IMR-90 (cell line): ENCODE measurements at regions of chr2 and their contacts with region 1.

Region 1: GRCh38 chr2:112259509-112260294 is 4.9 kb upstream of the ZC3H8 start:
- DNase-seq: peak; percentile 76
- ATAC-seq: peak; percentile 63
- H3K4me3 ChIP-seq: no peak overlapping the region
- H3K27ac ChIP-seq: no peak overlapping the region
- H3K4me1 ChIP-seq: no peaks in the 10 kb centered on the region
- H3K27me3 ChIP-seq: peaks cover 4% of the 10 kb centered on the region; the same call in 1 of the 2 replicates
- CTCF ChIP-seq: peak; percentile 98
- POLR2A ChIP-seq: no peak
- RAD21 ChIP-seq: peak; percentile 96

Region 2: DNA sequence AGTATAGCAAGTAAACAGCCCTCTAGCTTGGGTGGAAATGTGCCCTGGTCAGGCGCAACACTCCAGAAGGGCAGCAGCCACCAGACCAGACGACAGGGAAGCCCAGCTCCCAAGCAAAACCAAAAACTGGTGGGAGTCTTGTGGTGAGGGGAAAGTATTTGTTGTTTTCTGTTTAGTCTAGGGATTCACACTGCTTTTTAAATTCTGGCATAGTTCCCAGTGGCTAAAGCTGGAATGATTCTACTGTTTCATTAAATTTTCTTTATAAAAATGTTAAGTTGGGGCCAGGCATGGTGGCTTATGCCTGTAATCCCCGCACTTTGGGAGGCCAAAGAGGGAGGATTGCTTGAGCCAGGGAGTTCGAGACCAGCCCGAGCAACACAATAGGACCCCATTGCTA is 322.8 kb before region 1 on chr2:
- CTCF ChIA-PET with region 1: no interaction called
- POLR2A ChIA-PET with region 1: no interaction called
- dilution Hi-C with region 1: no loop called
- in situ Hi-C with region 1: no loop called
- intact Hi-C with region 1: no loop called
- DNase-seq: no peak
- ATAC-seq: no peak
- H3K4me3 ChIP-seq: no peak overlapping the region
- H3K27ac ChIP-seq: no peak overlapping the region
- H3K4me1 ChIP-seq: no peaks in the 10 kb centered on the region
- H3K27me3 ChIP-seq: peaks cover 14% of the 10 kb centered on the region
- CTCF ChIP-seq: no peak
- POLR2A ChIP-seq: no peak
- RAD21 ChIP-seq: no peak

Region 3: DNA sequence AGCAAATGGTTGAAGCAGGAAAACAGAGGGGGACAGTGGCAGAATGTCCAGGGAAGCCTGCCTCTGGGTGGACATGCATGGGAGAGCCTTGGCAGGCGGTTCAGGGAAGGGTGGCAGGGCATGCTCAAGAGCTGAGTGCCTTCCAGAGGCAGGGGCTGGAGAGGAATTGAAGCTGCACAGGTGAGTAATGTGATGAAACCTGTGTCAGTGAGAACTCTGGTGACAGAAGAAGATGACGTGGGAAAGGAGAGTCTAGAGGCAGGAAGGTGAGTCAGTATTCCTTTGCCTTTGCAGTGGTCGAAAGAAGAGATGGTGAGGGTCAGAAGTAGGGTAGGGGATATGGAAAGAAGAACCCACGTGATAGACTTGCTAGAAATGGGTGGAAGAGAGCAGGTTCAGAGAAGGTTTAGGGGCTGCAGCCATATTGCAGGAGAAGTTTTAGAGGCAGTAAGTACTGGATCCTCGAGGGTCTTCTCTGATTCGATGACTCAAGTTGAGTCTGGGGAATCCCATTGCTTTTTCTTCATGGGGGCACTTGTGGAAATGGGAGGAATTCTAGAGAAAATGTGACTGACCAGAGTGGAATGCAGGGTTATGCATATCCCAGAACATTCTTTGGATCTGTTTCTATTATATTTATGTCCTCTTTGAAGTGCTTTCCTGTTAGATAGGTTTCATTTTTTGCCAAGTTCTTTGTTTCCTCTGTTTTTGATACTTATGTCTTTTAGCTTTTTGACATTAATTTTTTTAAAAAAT is 167.2 kb before region 1 on chr2:
- CTCF ChIA-PET with region 1: no interaction called
- POLR2A ChIA-PET with region 1: no interaction called
- dilution Hi-C with region 1: no loop called
- in situ Hi-C with region 1: no loop called
- intact Hi-C with region 1: no loop called
- DNase-seq: peak; percentile 83
- ATAC-seq: peak; percentile 82
- H3K4me3 ChIP-seq: no peak overlapping the region
- H3K27ac ChIP-seq: peak overlapping the region; percentile 32; the same call in 1 of the 2 replicates
- H3K4me1 ChIP-seq: peaks cover 15% of the 10 kb centered on the region
- H3K27me3 ChIP-seq: no peaks in the 10 kb centered on the region
- CTCF ChIP-seq: no peak
- POLR2A ChIP-seq: no peak
- RAD21 ChIP-seq: no peak

Region 4: DNA sequence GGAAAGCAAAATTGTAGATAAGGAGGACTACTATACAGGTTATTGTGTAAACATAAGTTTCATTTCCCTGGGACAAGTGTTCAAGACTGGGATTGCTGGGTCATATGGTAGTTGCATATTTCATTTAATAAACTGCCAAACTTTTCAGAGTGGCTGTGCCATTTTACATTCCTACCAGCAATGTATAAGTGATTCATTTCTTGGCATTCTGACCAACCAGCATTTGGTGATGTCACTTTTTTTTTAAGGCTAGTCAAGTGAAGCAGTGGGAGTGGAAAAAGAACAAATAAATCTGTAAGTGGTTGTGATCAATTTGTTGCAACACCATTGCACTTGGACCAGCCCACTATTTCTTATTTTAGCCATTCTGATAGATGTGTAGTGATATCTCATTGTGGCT is 319.5 kb after region 1 on chr2:
- CTCF ChIA-PET with region 1: interaction called, 3 read pairs
- POLR2A ChIA-PET with region 1: no interaction called
- dilution Hi-C with region 1: no loop called
- in situ Hi-C with region 1: no loop called
- intact Hi-C with region 1: loop called (anchors 10 kb)
- DNase-seq: peak; percentile 92
- ATAC-seq: peak; percentile 19
- H3K4me3 ChIP-seq: no peak overlapping the region
- H3K27ac ChIP-seq: no peak overlapping the region
- H3K4me1 ChIP-seq: no peaks in the 10 kb centered on the region
- H3K27me3 ChIP-seq: no peaks in the 10 kb centered on the region
- CTCF ChIP-seq: peak; percentile 34
- POLR2A ChIP-seq: no peak
- RAD21 ChIP-seq: no peak